ENCODE measurements at regions of chr1 and their contacts with region 1.

Region 1: GRCh38 chr1:39653546-39654031 is 14.1 kb upstream of the HEYL start:
- DNase-seq: peak; percentile 75
- CTCF ChIP-seq: peak; percentile 88

Region 2: DNA sequence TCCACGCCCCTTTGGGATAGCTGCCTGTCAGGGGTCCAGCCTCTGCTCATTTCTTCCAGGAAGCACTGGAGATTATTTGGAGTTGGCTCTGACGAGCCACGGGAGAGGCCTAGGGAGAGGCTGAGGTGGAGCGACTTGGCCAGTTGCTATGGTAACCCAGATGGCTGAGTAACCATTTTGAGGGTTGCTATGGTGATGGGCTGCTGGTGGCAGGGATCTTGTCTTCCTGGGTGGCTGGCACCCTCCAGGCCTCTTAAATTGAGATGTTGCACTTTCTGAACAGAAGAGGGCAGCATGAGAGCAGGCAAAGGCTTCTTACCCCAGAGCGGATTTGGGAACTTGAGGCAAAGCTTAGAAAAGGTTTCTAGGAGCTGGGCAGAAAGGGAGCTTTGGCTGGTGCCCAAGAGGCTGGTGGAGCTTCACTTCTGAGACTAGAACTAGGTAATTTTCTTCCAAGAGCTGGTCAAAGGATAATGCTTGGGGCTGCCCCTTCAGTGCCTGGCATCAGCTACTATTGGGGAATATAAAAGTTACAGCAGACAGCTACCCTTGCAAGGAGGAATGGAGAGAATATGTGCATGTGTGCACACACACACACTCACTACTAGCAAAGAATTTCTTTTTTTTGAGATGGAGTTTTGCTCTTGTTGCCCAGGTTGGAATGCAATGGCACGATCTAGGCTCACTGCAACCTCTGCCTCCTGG is 554.9 kb before region 1 on chr1:
- CTCF ChIA-PET with region 1: interaction called, 17 read pairs
- POLR2A ChIA-PET with region 1: no interaction called
- DNase-seq: peak; percentile 81
- CTCF ChIP-seq: peak; percentile 84

Region 3: GRCh38 chr1:39391691-39392679 is 261.6 kb before region 1 on chr1:
- CTCF ChIA-PET with region 1: no interaction called
- POLR2A ChIA-PET with region 1: no interaction called
- DNase-seq: no peak
- CTCF ChIP-seq: no peak

Region 4: GRCh38 chr1:39632682-39633417 is 20.7 kb before region 1 on chr1:
- CTCF ChIA-PET with region 1: interaction called, 44 read pairs
- POLR2A ChIA-PET with region 1: no interaction called
- DNase-seq: no peak
- CTCF ChIP-seq: no peak

Region 5: DNA sequence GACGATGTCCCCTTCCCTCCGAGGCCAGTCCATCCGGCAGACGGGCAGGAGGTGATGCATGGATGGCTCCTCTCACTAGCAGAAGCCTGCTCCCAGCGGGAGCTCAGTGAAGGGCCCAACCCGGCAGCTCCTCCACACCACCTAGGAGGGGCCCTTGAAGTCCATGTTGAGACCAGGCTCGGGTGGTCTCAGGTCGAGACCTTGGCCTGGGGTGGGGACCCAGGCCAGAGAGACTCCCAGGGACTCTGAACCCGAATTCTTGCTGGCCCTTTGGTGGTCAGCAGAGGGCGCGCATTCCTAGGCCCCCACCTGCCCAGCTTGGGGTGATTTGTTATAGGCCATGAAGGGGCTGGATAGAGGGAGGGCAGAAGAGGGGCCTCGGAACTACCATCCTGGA is 19.0 kb after region 1 on chr1:
- CTCF ChIA-PET with region 1: interaction called, 276 read pairs
- POLR2A ChIA-PET with region 1: no interaction called
- DNase-seq: peak; percentile 61
- CTCF ChIP-seq: peak; percentile 55

Region 6: GRCh38 chr1:39691262-39692151 is 37.9 kb after region 1 on chr1 and contains the start of gene HPCAL4:
- CTCF ChIA-PET with region 1: interaction called, 17 read pairs
- POLR2A ChIA-PET with region 1: no interaction called
- DNase-seq: peak; percentile 85
- CTCF ChIP-seq: no peak

Region 7: GRCh38 chr1:39711104-39711965 is 57.7 kb after region 1 on chr1:
- CTCF ChIA-PET with region 1: interaction called, 15 read pairs
- POLR2A ChIA-PET with region 1: no interaction called
- DNase-seq: no peak
- CTCF ChIP-seq: no peak